Activated CD8-positive, alpha-beta T cell treated with anti-CD3 and anti-CD28 coated beads, Interleukin-2, amount 10 ng/mL, durations not matched to agents 7 days and 5 days (primary cell): ENCODE measurements at regions of chr2 and their contacts with region 1.

Region 1: DNA sequence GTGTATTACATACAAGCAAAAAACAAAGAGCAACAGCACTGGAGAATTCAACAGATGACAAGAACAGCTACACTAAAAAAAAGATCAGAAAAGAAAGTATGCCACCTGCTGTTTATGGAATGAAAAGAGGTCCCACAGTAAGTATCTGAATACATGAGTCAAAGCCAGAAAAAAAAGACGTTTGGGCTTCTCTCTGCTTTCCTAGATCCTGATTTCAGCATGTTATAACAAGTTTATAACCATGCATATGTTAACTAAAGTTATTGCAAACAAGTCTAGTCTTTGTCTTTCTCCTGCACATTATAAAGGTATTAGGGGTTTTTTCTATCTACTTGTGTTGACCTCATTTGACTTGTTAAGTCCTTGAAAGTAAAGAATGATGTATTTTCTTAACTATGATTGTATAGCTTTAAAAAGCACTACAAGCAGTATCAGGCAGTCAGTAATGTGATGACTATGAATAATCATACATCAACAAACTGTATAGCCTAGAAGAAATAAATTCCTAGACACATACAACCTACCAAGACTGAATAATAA is 108.5 kb upstream of the COL5A2 start:
- DNase-seq: no peak
- ATAC-seq: peak; percentile 70
- H3K4me3 Mint-ChIP-seq: no peak overlapping the region
- H3K27ac Mint-ChIP-seq: no peak overlapping the region
- H3K4me1 Mint-ChIP-seq: peaks cover 15% of the 10 kb centered on the region
- H3K27me3 Mint-ChIP-seq: no peaks in the 10 kb centered on the region

Region 2: GRCh38 chr2:189305291-189305943 is 17.4 kb after region 1 on chr2:
- CTCF ChIA-PET with region 1: interaction called, 10 read pairs
- POLR2A ChIA-PET with region 1: no interaction called
- DNase-seq: no peak
- ATAC-seq: no peak
- H3K4me3 Mint-ChIP-seq: no peak overlapping the region
- H3K27ac Mint-ChIP-seq: no peak overlapping the region
- H3K4me1 Mint-ChIP-seq: peaks cover 53% of the 10 kb centered on the region
- H3K27me3 Mint-ChIP-seq: no peaks in the 10 kb centered on the region

Region 3: GRCh38 chr2:189674374-189675112 is 386.5 kb after region 1 on chr2 and contains the start of gene ANKAR:
- CTCF ChIA-PET with region 1: no interaction called
- POLR2A ChIA-PET with region 1: no interaction called
- DNase-seq: peak; percentile 77
- ATAC-seq: peak; percentile 97
- H3K4me3 Mint-ChIP-seq: peak within 1 kb of the TSS; percentile 88
- H3K27ac Mint-ChIP-seq: peak within 1 kb of the TSS; percentile 96
- H3K4me1 Mint-ChIP-seq: peaks cover 30% of the 10 kb centered on the region
- H3K27me3 Mint-ChIP-seq: no peaks in the 10 kb centered on the region
- total RNA-seq, gene ANKAR: 4.8 to 5.2 TPM